OCI-LY7 (cell line): ENCODE measurements at regions of chr9 and their contacts with region 1.

Region 1: DNA sequence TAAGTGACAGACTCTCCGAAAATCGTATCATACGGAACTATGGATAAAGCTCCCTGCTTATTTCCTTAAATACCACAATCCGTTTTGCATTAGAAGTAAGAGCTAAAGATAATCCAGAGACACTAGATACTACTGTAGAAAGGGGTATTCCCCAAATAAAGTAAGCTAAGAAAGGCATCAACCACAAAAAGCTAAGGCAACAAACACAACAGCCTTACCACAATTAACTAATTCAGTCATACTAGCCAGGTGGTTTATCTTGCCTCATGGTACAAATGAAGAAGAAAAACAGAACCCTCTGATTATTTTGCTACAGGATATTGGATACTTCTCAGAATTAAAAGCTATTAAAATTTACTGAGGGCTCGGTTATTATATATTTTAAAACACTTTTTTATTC is 14.1 kb downstream of the ERP44 start:
- DNase-seq: peak; percentile 82
- H3K4me3 ChIP-seq: peak overlapping the region; percentile 68
- H3K27ac ChIP-seq: peak overlapping the region; percentile 95
- H3K4me1 ChIP-seq: peaks cover 95% of the 10 kb centered on the region
- CTCF ChIP-seq: no peak

Region 2: GRCh38 chr9:100028201-100028784 is 56.4 kb before region 1 on chr9:
- CTCF ChIA-PET with region 1: no interaction called
- POLR2A ChIA-PET with region 1: interaction called, 3 read pairs
- intact Hi-C with region 1: loop called (anchors 2 kb)
- DNase-seq: peak; percentile 83
- H3K4me3 ChIP-seq: no peak overlapping the region
- H3K27ac ChIP-seq: no peak overlapping the region
- H3K4me1 ChIP-seq: peaks cover 24% of the 10 kb centered on the region
- CTCF ChIP-seq: peak; percentile 99

Region 3: GRCh38 chr9:100058699-100059579 is 25.8 kb before region 1 on chr9:
- CTCF ChIA-PET with region 1: no interaction called
- POLR2A ChIA-PET with region 1: interaction called, 38 read pairs
- intact Hi-C with region 1: loop called (anchors 1 kb)
- DNase-seq: peak; percentile 93
- H3K4me3 ChIP-seq: peak overlapping the region; percentile 39
- H3K27ac ChIP-seq: peak overlapping the region; percentile 98
- H3K4me1 ChIP-seq: peaks cover 64% of the 10 kb centered on the region
- CTCF ChIP-seq: no peak

Region 4: DNA sequence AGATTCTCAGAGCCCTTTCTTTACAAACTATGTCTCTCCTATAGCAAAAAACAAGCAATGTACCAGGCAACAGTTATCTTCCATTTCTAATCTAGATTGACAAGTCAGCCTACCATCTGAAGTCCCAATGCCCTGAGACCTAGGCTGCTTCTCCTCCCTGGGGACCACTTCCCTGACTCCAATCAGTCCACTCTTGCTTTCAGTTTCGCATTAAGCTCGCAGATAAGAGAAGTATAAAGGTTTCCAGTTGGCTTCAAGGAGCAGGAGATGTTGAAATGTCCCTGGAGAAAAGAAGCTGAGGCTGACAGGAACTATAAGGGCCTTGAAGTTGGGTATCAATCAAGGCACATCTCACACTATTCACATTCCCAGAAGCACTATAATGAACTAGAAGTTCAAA is 18.2 kb before region 1 on chr9:
- CTCF ChIA-PET with region 1: no interaction called
- POLR2A ChIA-PET with region 1: interaction called, 38 read pairs
- intact Hi-C with region 1: no loop called
- DNase-seq: peak; percentile 67
- H3K4me3 ChIP-seq: no peak overlapping the region
- H3K27ac ChIP-seq: peak overlapping the region; percentile 54
- H3K4me1 ChIP-seq: peaks cover 52% of the 10 kb centered on the region
- CTCF ChIP-seq: no peak

Region 5: DNA sequence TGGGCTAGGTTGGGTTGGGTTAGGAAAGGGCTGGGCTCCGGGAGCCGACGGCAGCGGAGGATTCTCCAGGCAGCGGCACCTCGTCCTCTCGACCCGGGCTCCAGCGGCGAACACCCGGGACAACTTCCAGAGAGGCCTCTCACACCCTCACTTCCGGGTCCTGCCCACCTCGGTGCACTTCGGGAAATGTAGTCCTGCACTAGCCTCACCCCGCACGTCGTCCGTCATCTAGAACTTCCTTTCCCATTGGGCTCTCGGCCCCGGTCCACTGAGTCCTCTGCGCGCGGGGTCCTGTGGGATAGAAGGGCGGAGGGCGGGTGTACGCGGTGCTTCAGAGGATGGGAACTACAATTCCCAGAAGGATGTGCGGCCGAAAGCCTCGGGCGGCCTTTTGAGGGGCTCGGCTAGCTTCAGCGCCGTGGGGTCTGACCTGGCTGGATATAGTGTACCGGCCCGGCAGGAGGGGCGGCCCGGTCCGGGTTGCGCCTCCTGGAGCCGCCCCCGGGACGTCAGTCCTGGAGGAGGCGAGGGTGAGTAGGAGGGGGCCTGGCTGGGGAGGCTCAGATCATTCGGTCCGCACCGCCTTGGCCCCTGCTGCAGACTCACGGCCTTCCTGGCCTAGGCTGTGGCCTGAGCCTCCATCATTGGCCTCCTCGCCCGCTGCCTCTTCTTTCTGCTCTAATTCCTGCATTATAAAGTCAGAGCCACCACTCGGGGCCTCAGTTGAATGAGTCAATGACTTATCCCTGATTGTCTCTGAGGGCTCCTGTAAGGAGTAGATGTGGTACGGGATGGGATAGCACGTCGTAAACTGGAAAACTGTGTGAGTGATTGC is 14.4 kb after region 1 on chr9 and contains the starts of genes ERP44 and INVS:
- CTCF ChIA-PET with region 1: interaction called, 3 read pairs
- POLR2A ChIA-PET with region 1: interaction called, 108 read pairs
- intact Hi-C with region 1: no loop called
- DNase-seq: peak; percentile 99
- H3K4me3 ChIP-seq: peak within 1 kb of the TSS; percentile 97
- H3K27ac ChIP-seq: peak within 1 kb of the TSS; percentile 71
- H3K4me1 ChIP-seq: peaks cover 34% of the 10 kb centered on the region
- CTCF ChIP-seq: no peak
- total RNA-seq, gene ERP44: 15.0 and 19.3 TPM in 2 replicates
- total RNA-seq, gene INVS: 30.7 and 33.1 TPM in 2 replicates